Cardiac septum (tissue), 1 donor: ENCODE measurements at regions of chr15 and their contacts with region 1.

Region 1: GRCh38 chr15:99296386-99296785 is 45.1 kb downstream of the LRRC28 start:
- DNase-seq: no peak

Region 2: DNA sequence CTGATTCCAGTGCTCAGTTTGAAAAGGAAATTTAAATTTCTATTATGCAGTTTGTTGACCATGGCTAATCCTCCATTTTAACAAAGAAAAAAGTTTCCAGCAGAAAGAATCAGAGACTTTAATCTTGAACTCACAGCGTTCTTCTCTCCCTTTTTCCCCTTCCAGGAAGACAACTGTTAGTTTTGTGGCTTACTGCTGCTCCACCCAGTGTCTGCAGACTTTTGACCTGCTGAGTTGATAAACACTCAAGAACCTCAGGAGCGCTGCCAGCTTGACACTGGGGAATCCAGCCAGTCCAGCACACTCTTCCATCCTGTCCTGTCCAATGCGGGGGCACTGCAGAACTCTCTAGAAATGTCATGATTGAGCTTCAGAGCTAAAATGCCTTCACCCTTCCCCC is 89.5 kb after region 1 on chr15:
- intact Hi-C with region 1: loop called (anchors 10 kb)
- DNase-seq: peak; percentile 87